ENCODE measurements at regions of chr17 and their contacts with region 1.

Region 1: DNA sequence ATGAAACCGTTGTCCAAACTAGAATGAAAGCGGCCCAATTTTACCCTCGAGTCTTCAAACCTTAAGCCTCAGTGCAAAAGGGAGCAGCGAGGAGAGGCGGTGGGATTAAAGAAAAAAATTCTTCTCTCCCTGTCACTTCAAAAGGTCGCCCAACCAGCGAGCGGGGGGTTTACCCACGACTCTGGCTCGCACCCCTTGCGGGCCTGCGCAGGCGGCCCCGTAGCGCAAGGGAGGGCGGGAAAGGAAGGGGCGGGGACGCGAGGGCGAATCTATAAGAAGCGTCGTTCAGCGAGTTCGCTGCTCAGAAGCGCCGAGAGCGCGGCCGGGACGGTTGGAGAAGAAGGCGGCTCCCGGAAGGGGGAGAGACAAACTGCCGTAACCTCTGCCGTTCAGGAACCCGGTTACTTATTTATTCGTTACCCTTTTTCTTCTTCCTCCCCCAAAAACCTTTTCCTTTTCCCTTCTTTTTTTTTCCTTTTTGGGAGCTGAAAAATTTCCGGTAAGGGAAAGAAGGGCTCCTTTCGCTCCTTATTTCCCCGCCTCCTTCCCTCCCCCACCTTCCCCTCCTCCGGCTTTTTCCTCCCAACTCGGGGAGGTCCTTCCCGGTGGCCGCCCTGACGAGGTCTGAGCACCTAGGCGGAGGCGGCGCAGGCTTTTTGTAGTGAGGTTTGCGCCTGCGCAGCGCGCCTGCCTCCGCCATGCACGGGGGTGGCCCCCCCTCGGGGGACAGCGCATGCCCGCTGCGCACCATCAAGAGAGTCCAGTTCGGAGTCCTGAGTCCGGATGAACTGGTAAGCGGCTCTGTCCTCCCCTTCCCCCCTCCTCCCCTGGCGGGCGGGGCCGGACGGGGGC is at the start of gene POLR2A:
- DNase-seq: peak; percentile 99
- H3K4me3 ChIP-seq: peak within 1 kb of the TSS; percentile 67
- H3K27ac ChIP-seq: peak within 1 kb of the TSS; percentile 90 to 98
- H3K4me1 ChIP-seq: peaks cover 12% of the 10 kb centered on the region
- H3K27me3 ChIP-seq: no peaks in the 10 kb centered on the region
- CTCF ChIP-seq: peak in 2 of 3 donors; percentile 27 to 43
- EP300 ChIP-seq: peak; percentile 73
- POLR2A ChIP-seq: peak; percentile 100
- total RNA-seq, gene POLR2A: 39.5 to 110 (median 88.2) TPM

Region 2: GRCh38 chr17:7444682-7445618 is 39.3 kb before region 1 on chr17 and contains the start of gene CHRNB1:
- intact Hi-C with region 1: loop called in 3 of 4 experiments (anchors 5 kb)
- DNase-seq: peak in 4 of 5 donors; percentile 32 to 73 (median 57)
- H3K4me3 ChIP-seq: no peak within 1 kb of the TSS
- H3K27ac ChIP-seq: no peak within 1 kb of the TSS
- H3K4me1 ChIP-seq: peaks cover 2% of the 10 kb centered on the region
- H3K27me3 ChIP-seq: no peaks in the 10 kb centered on the region
- CTCF ChIP-seq: no peak
- EP300 ChIP-seq: no peak
- POLR2A ChIP-seq: no peak
- total RNA-seq, gene CHRNB1: 3.2 to 13.5 (median 7.6) TPM

Region 3: DNA sequence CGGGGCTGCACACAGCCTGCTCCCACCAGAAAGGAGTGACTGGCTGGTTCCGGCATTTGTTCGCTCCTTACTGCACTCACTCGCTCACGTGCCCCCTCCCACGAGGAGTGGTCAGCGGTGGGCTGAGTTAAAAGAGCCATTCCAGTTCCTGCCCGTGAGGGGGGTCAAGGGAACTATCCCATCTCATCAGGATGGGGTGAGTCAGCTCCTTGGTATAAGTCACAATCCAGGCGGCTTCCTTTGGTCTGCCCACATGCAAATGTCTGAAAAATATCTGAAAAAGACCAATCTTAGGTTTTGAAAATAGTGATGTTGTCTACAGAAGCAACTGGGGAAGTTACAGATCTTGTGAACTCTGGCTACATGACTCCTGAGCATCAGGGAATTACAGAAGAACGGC is 54.6 kb after region 1 on chr17:
- intact Hi-C with region 1: no loop called
- DNase-seq: no peak
- H3K4me3 ChIP-seq: no peak overlapping the region
- H3K27ac ChIP-seq: no peak overlapping the region
- H3K4me1 ChIP-seq: peaks cover 2% of the 10 kb centered on the region
- H3K27me3 ChIP-seq: no peaks in the 10 kb centered on the region
- CTCF ChIP-seq: no peak
- EP300 ChIP-seq: no peak
- POLR2A ChIP-seq: no peak

Region 4: GRCh38 chr17:8138672-8139371 is 654.5 kb after region 1 on chr17:
- intact Hi-C with region 1: no loop called
- DNase-seq: peak; percentile 93 to 98 (median 96)
- H3K4me3 ChIP-seq: peak overlapping the region; percentile 0
- H3K27ac ChIP-seq: peak overlapping the region; percentile 49 to 84
- H3K4me1 ChIP-seq: no peaks in the 10 kb centered on the region
- H3K27me3 ChIP-seq: no peaks in the 10 kb centered on the region
- CTCF ChIP-seq: peak; percentile 90 to 96 (median 95)
- EP300 ChIP-seq: no peak
- POLR2A ChIP-seq: peak; percentile 38